ENCODE measurements at regions of chr1 and their contacts with region 1.

Region 1: DNA sequence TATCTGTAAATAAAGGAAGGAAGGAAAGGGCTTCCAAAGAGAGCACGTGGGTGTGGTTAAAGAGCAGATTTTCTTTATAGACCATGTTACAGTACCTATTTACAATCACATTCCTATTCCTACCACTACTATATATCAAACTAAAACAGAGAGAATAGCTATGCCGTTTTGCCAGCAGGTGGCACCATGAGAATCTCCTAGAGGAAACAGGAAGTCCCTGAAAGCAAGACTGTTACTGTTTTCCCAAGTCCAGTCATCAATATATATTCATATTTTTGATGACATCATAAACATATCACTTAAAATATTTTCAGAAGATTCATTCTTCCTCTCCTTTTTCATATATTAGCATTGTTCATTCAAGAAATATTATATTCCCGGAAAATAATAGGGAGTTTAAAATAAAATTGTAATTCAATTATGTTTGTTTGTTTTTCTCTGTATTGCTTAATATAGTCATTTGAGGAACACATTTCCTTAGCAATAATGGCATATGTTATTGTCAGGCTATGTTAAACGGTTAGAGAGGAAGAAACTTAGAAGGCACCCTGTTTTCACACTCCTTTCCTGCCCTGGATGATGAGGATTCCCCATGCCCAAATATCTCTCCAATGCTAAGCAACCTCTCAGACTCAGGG is 6.6 kb downstream of the CCDC190 start:
- DNase-seq: peak; percentile 19
- H3K4me3 ChIP-seq: no peak overlapping the region
- H3K27me3 ChIP-seq: no peaks in the 10 kb centered on the region
- CTCF ChIP-seq: peak; percentile 77

Region 2: GRCh38 chr1:162678439-162678838 is 175.9 kb before region 1 on chr1:
- CTCF ChIA-PET with region 1: no interaction called
- POLR2A ChIA-PET with region 1: no interaction called
- DNase-seq: no peak
- H3K4me3 ChIP-seq: no peak overlapping the region
- H3K27me3 ChIP-seq: no peaks in the 10 kb centered on the region
- CTCF ChIP-seq: no peak

Region 3: DNA sequence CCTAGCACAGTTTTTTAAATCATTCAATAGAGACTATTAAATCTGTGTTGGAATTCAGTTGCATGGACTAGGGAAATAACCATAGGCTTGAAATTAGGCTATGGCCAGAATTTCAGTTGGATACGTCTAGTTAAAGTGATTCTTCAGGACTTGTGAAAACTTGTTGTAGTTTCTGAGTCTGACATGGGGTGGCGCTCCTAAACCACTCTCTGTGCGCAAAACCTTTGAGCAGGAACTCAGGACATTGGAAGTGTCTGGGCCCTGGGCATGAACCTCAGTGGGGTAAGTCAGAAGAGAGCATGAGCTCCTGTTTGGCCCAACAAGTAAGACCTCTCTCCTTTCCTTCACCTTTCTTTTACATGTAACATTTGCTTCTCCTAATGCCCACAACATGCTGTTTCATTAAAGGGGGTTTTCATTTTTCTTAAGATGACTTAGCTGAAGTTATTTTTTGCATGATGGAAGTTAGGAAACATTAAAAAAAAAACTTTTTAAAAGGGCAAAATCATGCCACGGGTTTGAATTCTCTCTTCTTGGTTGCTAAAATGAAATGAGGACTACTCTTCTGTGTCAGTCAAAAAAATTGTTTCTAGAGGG is 23.7 kb after region 1 on chr1:
- CTCF ChIA-PET with region 1: interaction called, 21 read pairs
- POLR2A ChIA-PET with region 1: no interaction called
- DNase-seq: no peak
- H3K4me3 ChIP-seq: no peak overlapping the region
- H3K27me3 ChIP-seq: no peaks in the 10 kb centered on the region
- CTCF ChIP-seq: peak; percentile 81

Region 4: GRCh38 chr1:162973381-162973795 is 119.0 kb after region 1 on chr1:
- CTCF ChIA-PET with region 1: no interaction called
- POLR2A ChIA-PET with region 1: no interaction called
- DNase-seq: peak; percentile 89
- H3K4me3 ChIP-seq: no peak overlapping the region
- H3K27me3 ChIP-seq: no peaks in the 10 kb centered on the region
- CTCF ChIP-seq: no peak

Region 5: DNA sequence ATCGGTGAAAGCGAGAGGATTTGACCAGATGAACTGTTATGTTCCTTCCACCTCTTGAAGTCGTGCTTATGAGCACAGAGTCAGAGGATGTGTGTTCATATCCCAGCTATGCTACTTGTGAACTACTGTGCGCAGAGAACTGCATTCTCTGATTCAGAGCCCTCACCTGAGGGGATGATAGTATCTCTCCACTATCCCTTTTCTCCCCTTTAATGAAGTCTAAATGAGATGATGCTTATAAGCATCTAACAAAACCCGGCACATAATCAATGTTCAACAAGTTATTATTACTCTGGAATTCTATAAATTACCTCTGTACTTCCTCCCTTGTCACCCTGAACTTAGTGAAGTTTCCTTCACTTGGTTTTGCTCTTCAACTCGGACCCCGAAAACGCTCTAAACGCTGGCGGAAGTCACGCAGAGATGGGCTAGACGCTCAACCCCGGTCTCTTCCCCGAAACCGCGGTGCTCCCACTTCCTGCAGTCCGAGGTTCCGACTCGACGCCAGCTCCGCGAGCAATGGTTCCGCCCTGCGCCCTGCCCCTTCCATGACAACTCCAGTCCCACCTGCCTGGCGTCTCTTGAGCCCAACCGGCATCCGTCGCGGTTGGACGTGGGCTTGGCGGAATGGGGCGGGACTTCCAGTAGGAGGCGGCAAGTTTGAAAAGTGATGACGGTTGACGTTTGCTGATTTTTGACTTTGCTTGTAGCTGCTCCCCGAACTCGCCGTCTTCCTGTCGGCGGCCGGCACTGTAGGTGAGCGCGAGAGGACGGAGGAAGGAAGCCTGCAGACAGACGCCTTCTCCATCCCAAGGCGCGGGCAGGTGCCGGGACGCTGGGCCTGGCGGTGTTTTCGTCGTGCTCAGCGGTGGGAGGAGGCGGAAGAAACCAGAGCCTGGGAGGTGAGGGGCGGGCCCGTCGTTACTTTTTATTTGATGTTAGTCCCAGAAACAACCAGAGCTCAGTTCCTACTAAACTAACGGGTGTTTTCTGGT is 467.2 kb after region 1 on chr1 and contains the start of gene NUF2:
- CTCF ChIA-PET with region 1: interaction called, 31 read pairs
- POLR2A ChIA-PET with region 1: no interaction called
- DNase-seq: peak; percentile 88
- H3K4me3 ChIP-seq: peak within 1 kb of the TSS; percentile 75
- H3K27me3 ChIP-seq: no peaks in the 10 kb centered on the region
- CTCF ChIP-seq: no peak
- polyA plus RNA-seq, gene NUF2: 5.9 and 10.6 TPM in 2 replicates